GM10248 (cell line): ENCODE measurements at regions of chr17 and their contacts with region 1.

Region 1: DNA sequence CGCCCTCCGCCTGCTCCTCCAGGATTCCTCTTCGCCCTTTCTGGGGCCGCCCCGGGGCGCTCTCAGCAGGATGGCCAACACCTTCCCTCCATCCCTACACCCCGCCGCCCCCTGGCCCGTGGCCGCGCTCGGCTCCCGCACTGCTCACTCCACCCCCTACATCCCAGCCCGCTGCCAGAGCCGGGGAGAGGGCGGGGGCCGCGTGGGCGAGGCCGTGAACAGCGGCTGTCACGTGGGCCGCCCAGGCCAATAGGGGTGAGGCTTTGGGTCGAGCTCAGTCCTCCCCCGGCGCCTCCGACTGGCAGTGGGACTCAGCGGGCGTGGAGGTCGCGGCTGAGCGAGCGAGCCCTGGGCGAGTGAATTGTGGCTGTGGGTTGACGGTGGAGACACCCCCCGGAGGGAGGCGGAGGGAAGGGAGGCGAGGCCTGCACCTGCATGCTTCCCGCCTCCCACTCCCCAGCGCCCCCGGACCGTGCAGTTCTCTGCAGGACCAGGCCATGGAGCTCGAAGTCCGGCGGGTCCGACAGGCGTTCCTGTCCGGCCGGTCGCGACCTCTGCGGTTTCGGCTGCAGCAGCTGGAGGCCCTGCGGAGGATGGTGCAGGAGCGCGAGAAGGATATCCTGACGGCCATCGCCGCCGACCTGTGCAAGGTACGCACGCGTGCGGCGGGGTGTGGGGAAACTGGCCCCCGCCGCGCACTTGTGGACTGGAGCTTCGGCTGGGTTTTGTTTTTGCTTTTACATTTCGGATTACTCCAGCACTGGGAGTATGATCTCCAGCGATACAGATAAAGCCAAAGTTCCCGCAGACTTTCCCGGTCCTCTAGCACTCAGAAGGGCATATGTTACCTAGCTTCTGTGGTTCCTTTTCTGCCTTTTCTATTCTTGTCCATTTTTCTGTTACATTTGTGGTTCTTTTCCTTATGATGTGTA is at the start of gene ALDH3A2:
- DNase-seq: peak; percentile 99
- CTCF ChIP-seq: peak; percentile 30

Region 2: DNA sequence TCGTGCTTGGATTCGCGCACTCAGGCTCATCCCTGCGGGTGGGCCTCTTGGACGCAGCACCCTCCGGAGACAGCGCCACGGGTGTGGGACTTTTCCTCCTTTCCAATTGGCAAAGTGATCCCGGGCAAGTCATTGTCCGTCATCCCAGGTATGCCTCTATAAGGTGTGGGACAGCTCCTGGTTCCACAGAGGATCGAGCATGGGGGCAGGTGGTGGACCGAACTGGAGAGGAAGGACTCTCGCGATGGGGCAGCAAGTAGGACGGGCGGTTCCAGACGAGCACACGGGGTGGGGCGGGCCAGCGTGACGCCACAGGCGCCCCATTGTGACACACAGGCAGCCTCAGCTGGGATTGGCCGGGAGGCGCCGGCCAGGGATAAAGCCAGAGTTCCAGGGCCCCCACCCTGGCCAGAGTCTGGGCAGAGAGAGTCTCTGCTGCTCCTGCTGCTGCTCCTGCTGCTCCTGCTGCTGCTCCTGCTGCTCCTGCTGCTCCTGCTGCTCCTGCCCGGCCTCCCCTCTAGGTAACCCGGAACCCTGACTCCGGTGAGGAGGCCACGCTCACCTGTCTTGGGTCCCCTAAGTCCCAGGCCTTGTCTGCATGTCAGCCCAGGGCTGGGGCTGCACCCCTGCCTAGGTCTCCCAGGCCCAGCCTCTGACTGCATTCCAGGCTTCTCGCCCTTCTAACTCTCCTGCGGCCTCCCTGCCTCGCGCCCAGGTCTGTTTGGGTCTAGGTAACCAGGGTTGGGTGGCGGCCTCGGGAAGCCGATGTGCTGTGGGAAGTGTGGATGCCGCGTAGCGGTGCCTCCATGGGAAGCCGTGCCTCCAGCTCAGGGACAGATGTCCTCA is 153.6 kb before region 1 on chr17:
- CTCF ChIA-PET with region 1: no interaction called
- POLR2A ChIA-PET with region 1: no interaction called
- DNase-seq: no peak
- CTCF ChIP-seq: no peak

Region 3: GRCh38 chr17:19513897-19514488 is 134.7 kb before region 1 on chr17:
- CTCF ChIA-PET with region 1: interaction called, 16 read pairs
- POLR2A ChIA-PET with region 1: no interaction called
- DNase-seq: peak; percentile 68
- CTCF ChIP-seq: peak; percentile 87

Region 4: GRCh38 chr17:19664136-19664820 is 15.5 kb after region 1 on chr17:
- CTCF ChIA-PET with region 1: interaction called, 26 read pairs
- POLR2A ChIA-PET with region 1: interaction called, 4 read pairs
- DNase-seq: no peak
- CTCF ChIP-seq: no peak

Region 5: DNA sequence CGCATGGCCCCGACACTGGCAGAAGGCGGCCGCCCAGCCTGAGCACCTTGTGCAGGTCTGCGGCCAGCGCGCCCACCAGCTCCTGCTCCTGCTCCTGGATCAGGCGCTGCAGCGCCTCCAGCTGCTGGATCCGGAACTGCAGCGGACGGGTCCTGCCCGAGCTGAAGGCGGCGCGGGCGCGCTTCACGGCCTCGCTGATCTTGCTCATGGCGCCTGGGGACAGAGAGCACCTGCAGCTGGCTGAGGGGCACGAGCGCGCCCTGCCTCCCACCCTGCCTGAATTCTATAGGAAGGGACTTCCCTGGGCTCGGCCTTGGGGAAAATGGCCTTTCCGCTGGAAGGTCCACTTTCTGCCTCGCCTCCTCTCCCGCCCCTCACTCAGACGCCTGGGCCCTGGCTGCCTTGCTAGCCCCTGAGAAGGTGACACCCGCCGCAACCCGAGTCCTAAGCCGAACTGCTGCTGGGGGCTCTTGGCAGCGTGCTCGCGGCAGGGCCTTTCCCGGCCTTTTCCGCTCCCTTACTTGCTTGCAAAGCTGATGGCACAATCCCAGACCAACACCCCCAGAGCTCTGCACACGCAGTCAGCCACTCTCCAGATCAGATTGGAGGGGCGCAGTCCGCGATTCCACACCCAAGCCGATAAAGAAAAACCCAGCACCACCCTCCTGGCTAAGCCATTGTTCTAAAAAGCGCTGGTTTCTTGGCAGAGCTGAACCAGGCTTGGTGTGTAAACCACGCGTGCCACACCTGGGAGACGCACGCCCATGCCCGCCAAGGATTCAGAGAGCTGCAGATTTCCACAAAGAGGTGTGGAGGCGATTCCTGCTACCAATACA is 96.4 kb after region 1 on chr17:
- CTCF ChIA-PET with region 1: interaction called, 16 read pairs
- POLR2A ChIA-PET with region 1: interaction called, 5 read pairs
- DNase-seq: peak; percentile 89
- CTCF ChIP-seq: peak; percentile 98

Region 6: DNA sequence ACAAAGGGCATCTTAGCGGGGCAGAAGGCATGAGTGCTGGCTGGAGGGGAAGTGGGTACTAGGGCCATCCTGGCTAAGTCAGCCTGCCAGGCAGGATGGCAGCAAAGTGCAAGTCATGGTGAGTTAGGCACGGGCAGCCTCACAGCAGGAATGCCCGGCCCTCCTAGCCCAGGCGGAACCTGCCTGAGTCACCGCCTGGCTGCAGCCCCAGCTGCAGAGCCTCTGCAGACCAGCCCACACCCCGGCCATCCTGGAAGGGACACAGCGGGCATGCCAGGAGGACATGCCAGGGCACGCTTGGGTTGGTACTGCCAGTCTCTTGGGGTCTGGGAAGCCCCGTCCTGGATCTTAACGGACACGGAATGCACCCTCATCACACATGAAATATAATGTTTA is 104.3 kb after region 1 on chr17:
- CTCF ChIA-PET with region 1: interaction called, 21 read pairs
- POLR2A ChIA-PET with region 1: no interaction called
- DNase-seq: no peak
- CTCF ChIP-seq: no peak